ENCODE measurements at regions of chr3 and their contacts with region 1.

Region 1: DNA sequence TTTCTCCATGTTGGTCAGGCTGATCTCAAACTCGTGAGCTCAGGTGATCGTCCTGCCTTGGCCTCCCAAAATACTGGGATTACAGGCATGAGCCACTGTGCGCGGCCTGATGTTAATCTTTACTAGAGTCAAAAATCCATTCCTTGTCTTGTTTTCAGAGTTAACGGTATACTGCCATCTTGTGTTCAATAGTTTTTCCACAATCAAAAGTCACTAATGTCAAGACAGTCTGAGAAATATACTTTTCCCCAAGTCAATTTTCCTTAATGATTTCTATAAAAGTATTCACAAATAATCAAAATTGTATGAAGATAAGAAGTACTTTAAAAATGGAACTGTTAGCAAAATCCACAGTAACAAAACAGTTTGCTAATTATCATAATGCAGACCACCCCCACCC is 8.5 kb downstream of the CRBN start:
- DNase-seq: no peak
- H3K4me3 Mint-ChIP-seq: no peak overlapping the region
- H3K27ac Mint-ChIP-seq: peak overlapping the region; percentile 45
- H3K4me1 Mint-ChIP-seq: peaks cover 55% of the 10 kb centered on the region
- H3K27me3 Mint-ChIP-seq: no peaks in the 10 kb centered on the region

Region 2: GRCh38 chr3:3157484-3157883 is 13.5 kb before region 1 on chr3:
- CTCF ChIA-PET with region 1: interaction called, 11 read pairs
- POLR2A ChIA-PET with region 1: interaction called, 3 read pairs
- DNase-seq: no peak
- H3K4me3 Mint-ChIP-seq: no peak overlapping the region
- H3K27ac Mint-ChIP-seq: no peak overlapping the region
- H3K4me1 Mint-ChIP-seq: no peaks in the 10 kb centered on the region
- H3K27me3 Mint-ChIP-seq: no peaks in the 10 kb centered on the region

Measured in activated CD4-positive, alpha-beta memory T cell treated with anti-CD3 and anti-CD28 coated beads, Interleukin-2, amount 10 ng/mL, durations not matched to agents 7 days and 5 days (primary cell).